ENCODE measurements at regions of chr4 and their contacts with region 1.

Region 1: DNA sequence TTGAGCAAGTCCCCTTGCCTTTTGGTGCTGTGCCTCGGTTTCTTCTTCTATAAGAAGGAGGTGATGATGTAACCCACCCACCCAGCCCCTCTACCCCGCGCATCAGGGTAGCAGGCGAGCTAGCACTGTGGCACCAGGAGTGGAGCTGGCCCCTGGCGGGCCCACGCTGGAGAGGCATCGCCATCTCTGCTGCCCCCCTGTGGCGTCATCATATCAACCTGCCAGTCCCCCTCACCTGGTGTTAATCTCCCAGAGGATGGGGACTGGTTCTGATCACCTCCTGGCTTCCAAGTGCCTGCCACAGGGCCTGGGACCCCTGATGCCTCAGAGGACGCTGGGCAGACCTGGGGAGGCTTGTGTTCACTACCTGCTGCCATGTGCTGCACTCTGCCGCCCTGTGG is 6.3 kb upstream of the SORCS2 start:
- DNase-seq: peak; percentile 46
- H3K4me3 Mint-ChIP-seq: no peak overlapping the region
- H3K27ac Mint-ChIP-seq: no peak overlapping the region
- H3K4me1 Mint-ChIP-seq: peaks cover 12% of the 10 kb centered on the region
- H3K27me3 Mint-ChIP-seq: peaks cover 29% of the 10 kb centered on the region

Region 2: DNA sequence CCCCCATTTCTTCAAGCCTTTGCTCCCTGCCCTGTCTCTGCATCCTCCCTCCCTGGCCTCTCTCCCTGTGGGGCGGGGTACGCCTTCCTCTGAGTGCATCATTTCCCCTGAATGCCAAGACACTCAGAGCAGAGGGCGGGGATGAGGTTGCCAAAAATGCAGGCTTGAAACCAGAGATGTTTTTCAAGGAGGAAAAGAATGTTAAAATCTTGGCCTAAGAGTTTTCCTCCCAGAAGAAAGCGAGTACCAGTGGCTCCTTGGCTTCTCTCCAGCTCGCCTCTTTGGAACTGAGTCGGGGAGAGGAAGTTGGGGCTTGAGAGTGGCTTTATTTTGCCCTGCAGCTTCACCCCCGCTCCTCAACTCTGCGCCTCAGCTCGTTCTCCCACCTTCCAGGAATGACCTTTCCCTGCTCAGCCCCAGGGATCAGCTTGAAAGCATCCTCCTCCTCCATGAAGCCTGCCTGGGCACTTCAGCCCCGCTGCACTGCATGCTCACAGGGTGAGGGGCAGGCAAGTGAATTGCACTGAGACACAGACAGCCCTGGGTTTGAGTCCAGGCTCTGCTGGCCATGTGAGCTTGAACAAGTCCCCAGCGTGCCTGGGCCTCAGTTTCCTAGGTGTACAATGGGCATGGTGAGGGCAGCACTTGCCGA is 51.2 kb before region 1 on chr4:
- CTCF ChIA-PET with region 1: no interaction called
- POLR2A ChIA-PET with region 1: no interaction called
- intact Hi-C with region 1: loop called (anchors 2 kb)
- DNase-seq: no peak
- H3K4me3 Mint-ChIP-seq: no peak overlapping the region
- H3K27ac Mint-ChIP-seq: no peak overlapping the region
- H3K4me1 Mint-ChIP-seq: peaks cover 2% of the 10 kb centered on the region
- H3K27me3 Mint-ChIP-seq: no peaks in the 10 kb centered on the region

Region 3: DNA sequence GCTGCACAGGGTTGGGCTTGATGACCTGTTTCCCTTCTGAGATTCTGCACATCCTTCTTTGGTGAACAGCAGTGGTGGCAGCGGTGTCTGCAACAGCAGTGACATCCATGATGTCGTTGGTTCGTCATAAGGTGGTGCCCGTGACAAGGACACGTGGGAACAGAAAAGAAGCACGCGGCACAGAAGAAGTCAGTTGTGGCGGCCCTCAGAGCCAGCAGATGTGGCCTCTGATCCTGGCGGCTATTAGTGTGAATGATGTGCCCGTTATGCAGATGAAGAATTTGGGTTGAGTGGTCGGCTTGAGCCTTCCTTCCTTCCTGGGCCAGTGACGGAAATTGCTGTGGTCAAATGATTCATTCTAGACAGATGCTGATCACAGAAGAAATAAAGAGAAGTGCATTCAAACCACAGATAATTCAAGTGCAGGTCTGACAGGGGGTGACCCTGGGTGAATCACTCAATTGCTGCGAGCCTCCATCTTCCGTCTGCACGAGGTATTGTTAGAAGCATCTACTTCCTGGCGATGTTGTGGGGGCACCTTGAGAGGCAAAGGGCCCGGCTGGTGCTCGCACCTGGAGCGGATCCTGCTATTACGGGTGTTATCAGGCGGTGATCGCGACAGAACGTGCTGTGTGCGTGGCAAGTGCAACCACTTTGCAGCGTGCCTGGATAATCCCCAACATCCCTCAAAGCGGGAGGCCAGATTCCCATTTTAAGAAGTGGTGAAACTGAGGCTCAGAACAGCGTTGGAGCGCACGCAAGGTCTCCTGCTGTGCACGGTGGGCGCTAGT is 463.9 kb after region 1 on chr4:
- CTCF ChIA-PET with region 1: no interaction called
- POLR2A ChIA-PET with region 1: no interaction called
- intact Hi-C with region 1: loop called (anchors 2 kb)
- DNase-seq: peak; percentile 77
- H3K4me3 Mint-ChIP-seq: no peak overlapping the region
- H3K27ac Mint-ChIP-seq: peak overlapping the region; percentile 77
- H3K4me1 Mint-ChIP-seq: peaks cover 43% of the 10 kb centered on the region
- H3K27me3 Mint-ChIP-seq: peaks cover 6% of the 10 kb centered on the region

Measured in activated CD4-positive, alpha-beta memory T cell treated with anti-CD3 and anti-CD28 coated beads for 36 hours (primary cell).